Sigmoid colon (tissue), 7 donors: ENCODE measurements at regions of chrX and their contacts with region 1.

Region 1: DNA sequence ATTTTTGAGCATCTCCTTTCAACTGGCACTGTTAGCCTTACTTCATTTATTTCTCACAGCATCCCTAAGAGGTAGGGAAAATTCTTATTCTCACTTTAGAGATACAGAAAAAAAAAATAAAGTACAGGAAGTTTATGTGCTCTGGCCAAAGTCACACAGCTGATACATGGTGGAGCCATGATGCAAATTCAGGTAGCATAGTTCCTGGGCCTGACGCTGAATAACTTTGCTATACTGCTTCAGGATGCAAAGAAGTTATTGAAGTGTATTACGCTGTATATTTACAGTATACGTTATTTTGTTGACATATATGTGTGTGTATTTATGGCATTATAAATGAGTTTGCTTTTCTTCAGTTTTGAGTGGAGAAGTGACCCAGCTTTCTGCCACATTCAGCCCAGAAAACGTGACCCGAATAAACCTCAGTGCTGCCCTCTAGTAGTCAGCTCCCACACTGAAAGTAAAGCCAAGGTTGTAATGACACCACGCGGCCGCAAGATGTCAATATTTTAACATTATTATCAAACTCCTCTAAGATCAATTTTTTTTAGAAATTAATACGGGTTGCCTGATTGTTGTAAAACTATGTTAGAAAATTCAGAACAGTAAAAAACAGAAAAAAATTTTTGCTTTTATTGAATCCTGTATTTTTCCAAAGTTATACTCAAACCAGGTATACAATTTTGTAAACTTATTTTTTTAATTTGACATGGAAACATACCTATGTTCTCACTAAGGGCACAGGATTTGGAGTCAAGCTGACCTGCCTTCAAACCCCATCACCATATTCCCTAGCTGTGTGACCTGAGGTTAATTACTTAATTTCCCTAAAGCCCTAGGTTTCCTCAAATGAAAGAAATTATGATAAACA is 3.8 kb upstream of the GUCY2F start:
- DNase-seq: peak; percentile 75
- H3K4me3 ChIP-seq: no peak overlapping the region
- H3K27ac ChIP-seq: no peak overlapping the region
- H3K4me1 ChIP-seq: no peaks in the 10 kb centered on the region
- H3K27me3 ChIP-seq: no peaks in the 10 kb centered on the region
- CTCF ChIP-seq: peak; percentile 70 to 79 (median 76)
- EP300 ChIP-seq: no peak
- POLR2A ChIP-seq: no peak

Region 2: GRCh38 chrX:109632906-109633504 is 147.3 kb after region 1 on chrX:
- intact Hi-C with region 1: loop called (anchors 5 kb)
- DNase-seq: no peak
- H3K4me3 ChIP-seq: no peak overlapping the region
- H3K27ac ChIP-seq: no peak overlapping the region
- H3K4me1 ChIP-seq: no peaks in the 10 kb centered on the region
- H3K27me3 ChIP-seq: no peaks in the 10 kb centered on the region
- CTCF ChIP-seq: no peak
- EP300 ChIP-seq: no peak
- POLR2A ChIP-seq: no peak

Region 3: DNA sequence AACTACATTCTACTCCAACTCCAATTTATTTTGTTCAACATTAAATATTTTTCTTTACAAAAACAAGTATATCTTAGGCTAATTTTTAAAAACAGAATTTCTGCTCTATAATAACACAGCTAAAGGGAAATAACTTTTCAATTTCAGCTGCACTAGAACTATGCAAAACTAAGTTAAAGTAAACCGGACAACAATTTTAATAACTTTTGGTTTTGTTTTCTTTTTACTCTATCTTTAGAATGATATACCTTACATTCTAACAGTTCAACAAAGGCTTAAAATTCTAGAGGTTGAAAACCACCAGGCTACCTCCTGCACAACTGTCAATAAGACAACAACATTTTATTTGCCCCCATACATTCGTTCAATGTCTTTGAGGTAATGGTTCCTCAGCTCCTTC is 158.0 kb after region 1 on chrX:
- intact Hi-C with region 1: no loop called
- DNase-seq: no peak
- H3K4me3 ChIP-seq: no peak overlapping the region
- H3K27ac ChIP-seq: no peak overlapping the region
- H3K4me1 ChIP-seq: no peaks in the 10 kb centered on the region
- H3K27me3 ChIP-seq: no peaks in the 10 kb centered on the region
- CTCF ChIP-seq: no peak
- EP300 ChIP-seq: no peak
- POLR2A ChIP-seq: no peak

Region 4: DNA sequence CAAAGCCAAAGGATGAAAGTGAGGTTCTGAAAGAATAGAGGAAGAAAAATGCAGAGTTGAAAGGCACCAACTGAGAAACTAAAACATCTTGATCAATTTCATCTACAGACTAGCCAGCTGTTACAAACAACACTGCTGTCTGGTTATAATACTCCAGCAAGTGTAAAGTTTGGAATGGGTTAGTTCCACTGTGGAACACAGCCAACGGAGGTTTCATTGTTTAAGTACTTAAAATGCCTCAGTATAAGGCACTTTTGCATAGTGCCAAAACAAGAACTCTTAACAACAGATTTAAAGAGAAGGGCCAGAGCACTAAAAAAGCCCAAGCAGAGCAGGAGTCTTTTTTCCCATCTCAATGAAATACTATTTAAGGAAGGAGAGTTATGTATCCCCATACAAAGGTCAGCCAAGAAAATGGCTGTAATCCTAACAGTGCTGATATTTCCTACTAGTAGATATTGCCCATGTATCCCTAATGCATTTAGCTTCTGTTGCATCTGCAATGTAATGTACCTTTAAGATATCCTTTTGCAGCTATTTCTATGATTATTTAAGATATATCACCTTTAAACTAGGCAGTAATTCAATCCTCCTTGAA is 230.8 kb after region 1 on chrX:
- intact Hi-C with region 1: no loop called
- DNase-seq: no peak
- H3K4me3 ChIP-seq: no peak overlapping the region
- H3K27ac ChIP-seq: peak overlapping the region in 2 of 4 donors; percentile 41 to 42
- H3K4me1 ChIP-seq: peaks cover 0 to 28% (median 18%) of the 10 kb centered on the region in 4 donors
- H3K27me3 ChIP-seq: no peaks in the 10 kb centered on the region
- CTCF ChIP-seq: no peak
- EP300 ChIP-seq: no peak
- POLR2A ChIP-seq: no peak

Region 5: GRCh38 chrX:109856974-109857373 is 371.3 kb after region 1 on chrX:
- intact Hi-C with region 1: loop called (anchors 10 kb)
- DNase-seq: no peak
- H3K4me3 ChIP-seq: no peak overlapping the region
- H3K27ac ChIP-seq: peak overlapping the region in 1 of 4 donors; percentile 15
- H3K4me1 ChIP-seq: no peaks in the 10 kb centered on the region
- H3K27me3 ChIP-seq: no peaks in the 10 kb centered on the region
- CTCF ChIP-seq: peak; percentile 26 to 65 (median 44)
- EP300 ChIP-seq: no peak
- POLR2A ChIP-seq: no peak

Region 6: DNA sequence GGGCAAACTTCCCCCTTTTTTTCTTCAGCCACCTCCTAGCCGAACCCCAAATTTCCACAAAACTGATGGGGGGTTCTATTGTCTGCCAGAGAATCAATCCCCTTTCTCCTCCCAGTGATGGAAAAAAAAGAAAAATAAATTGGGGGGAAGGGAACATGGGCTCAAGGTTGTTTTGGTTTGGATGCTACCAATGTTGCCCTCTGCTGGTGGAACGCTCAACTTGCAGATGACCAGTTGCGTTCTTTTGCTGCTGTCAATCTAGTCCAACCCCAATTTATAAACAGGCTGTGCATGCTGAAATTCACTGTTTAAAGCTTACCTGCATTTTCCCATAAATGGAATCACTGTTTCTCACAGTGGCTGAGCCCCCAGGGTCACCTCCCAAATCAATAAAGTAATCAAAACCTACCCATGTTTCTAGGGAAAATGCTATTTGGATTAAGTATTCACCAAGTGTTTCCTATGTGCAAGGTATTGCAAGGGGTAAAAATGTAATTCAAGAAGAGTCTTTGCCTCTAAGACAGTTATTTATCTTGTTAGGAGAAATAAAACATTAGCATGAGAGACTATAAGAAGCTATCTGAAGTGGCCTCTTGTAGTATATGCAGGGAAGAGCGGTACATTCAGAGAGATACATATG is 400.5 kb after region 1 on chrX:
- intact Hi-C with region 1: loop called (anchors 10 kb)
- DNase-seq: no peak
- H3K4me3 ChIP-seq: no peak overlapping the region
- H3K27ac ChIP-seq: no peak overlapping the region
- H3K4me1 ChIP-seq: no peaks in the 10 kb centered on the region
- H3K27me3 ChIP-seq: no peaks in the 10 kb centered on the region
- CTCF ChIP-seq: peak in 3 of 4 experiments; percentile 25 to 44 (median 44)
- EP300 ChIP-seq: no peak
- POLR2A ChIP-seq: no peak

Region 7: DNA sequence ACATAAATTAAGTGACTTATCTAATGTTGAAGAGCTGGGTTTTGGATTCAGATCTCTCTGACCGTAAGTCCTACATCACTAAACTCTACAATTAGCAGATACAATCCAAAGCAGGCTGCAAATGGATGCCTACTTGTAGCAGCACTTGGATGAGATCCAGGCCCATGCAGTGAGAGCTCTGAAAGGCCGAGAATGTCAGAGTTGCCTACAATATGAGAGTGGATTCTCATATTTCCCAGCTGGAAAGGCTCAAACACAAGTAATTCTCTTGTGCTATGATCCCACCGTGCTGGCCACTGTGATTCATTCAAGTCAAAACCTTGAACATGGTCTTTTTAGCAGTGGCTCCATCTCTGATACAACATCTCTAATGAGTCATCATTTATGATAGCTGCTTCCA is 1435.3 kb after region 1 on chrX:
- intact Hi-C with region 1: no loop called
- DNase-seq: no peak
- H3K4me3 ChIP-seq: no peak overlapping the region
- H3K27ac ChIP-seq: no peak overlapping the region
- H3K4me1 ChIP-seq: no peaks in the 10 kb centered on the region
- H3K27me3 ChIP-seq: no peaks in the 10 kb centered on the region
- CTCF ChIP-seq: no peak
- EP300 ChIP-seq: no peak
- POLR2A ChIP-seq: no peak